ENCODE measurements at regions of chr1 and their contacts with region 1.

Region 1: DNA sequence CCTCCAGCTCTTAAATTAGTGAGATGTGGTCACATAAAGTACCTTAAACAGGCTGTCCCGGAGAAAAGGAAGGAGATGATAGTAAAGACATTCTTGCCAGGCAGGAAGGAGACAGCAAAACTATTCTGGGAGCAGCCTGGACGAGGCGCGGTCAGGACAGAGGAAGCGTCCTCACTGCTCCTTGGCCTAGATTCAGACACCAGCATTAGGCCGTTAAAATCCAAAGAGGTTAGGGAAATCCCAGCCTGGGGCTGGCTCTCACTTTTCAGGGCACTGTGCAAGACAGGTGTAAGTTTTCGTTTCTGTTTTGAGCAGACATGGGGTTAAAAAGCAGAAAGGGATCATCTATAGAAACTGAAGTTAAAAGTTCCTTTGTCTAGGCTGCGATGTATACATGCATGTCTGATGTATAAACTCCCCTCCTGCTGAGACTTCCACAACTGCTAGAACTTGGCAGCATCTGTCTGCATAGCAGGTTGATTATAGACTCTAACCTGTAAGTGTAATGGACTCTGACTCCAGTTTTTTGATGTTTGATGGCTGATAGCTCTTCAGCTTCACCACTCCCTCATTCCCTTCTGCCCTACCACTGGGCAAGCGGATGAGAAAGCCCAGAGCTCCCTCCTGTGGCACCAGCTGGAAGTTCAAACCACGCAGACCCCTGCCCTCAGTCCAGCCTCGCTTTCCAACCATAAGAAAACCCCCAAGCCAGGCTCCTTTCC is 21.5 kb downstream of the STPG1 start:
- DNase-seq: peak; percentile 78
- CTCF ChIP-seq: peak; percentile 84

Region 2: DNA sequence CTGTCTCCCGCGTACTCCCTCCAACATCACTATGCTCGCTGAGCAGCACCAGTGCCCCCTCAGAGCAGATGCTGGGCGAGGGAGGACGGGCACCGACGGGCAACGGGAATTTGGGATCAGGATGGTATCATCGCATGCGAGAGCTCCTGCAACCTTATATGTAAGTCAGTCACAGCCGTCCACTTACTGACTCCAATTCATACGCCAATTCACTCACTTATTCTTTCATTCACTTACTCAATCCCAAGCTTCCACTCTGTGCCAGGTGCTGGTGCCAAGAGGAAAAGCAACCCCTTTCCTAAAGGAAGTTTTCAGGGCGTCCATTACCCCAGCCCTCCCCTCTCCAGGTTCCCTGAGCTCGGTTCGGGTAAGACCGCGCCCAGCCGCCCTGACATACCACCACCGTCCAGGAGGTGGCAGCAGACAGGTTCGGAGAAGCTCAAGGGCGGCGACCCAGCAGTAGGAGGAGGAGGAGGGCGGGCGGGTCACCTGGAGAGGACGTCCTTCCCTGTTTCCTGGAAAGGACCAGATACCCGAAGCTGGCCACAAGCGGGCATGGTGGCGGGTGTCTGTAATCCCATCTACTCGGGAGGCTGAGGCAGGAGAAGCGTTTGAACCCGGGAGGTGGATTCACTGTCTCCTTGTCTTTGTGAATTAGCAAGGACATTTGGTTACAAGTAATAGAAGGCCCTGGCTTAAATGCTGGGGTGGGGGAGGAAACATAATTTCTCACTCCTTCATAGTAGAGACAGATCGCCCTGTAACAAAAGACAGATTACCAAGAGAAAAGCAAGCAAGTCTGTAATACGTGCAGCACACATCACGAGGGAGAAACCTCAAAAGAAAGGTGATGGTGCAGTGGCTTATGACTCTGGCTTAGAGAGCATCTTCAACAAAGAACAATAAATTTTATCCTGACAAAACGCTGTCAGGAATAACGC is 241.5 kb before region 1 on chr1:
- CTCF ChIA-PET with region 1: interaction called, 136 read pairs
- POLR2A ChIA-PET with region 1: no interaction called
- DNase-seq: peak; percentile 86
- CTCF ChIP-seq: peak; percentile 97

Region 3: GRCh38 chr1:24301785-24302175 is 90.3 kb before region 1 on chr1:
- CTCF ChIA-PET with region 1: interaction called, 15 read pairs
- POLR2A ChIA-PET with region 1: no interaction called
- DNase-seq: no peak
- CTCF ChIP-seq: no peak

Region 4: DNA sequence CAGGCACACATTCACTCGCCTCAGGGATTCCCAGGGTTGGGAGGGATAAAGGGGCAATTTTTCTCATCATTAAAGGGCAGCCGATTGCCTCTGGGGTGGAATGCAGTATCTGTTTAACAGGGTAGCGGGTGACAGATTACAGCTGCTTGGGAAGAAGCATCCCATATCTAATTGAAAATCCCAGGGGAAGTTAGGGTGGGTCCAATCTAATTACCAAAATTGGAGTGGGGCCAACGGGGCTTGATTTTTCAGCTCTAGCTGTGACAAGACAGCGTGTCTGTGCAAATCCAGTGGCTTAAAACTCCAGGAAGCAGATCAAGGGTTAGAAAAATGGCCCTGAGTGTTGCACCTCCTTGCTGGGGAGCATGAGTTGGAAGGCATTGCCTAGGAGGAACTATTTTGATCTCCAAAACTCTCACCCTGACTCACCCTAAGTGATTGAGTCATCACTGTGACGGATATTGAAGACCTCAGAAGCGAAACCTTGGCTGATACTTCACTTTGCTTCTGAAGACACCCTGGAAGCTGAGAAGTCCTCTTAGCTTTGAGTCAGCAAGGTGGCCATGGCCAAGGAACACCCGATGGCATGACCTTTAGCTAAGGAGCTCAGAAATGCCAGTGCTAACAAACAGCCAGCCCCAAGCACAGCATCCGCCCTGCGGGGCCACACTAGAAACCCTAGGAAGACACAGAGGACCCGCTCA is 26.9 kb before region 1 on chr1:
- CTCF ChIA-PET with region 1: interaction called, 31 read pairs
- POLR2A ChIA-PET with region 1: no interaction called
- DNase-seq: peak; percentile 81
- CTCF ChIP-seq: no peak

Region 5: DNA sequence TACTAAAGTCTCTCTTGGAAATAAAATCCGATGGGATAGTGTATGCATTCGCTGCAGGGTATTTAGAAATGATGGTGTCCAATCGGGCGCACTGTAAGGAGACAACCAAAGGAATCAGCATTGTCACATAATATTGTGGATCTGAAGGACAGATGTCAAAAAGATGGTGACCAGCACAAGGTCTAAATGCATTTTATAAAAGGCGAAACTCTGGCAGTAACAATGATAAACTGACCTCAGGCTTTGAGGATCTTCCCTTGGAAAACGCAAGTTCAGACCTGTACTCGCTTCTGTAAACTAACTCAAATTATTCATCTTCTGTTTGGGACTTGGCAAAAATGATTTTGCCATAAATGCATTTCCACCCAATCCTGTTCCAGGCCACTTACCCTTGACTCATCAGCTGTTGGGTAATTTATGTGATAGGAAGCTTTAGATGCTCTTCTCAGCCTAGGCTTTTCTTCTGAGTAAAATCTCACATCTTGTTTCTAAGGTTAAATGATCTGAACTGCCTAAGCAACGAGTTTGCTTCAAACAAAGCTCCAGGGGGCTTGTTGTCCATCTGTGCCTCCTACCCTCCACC is 12.2 kb before region 1 on chr1:
- CTCF ChIA-PET with region 1: interaction called, 40 read pairs
- POLR2A ChIA-PET with region 1: no interaction called
- DNase-seq: no peak
- CTCF ChIP-seq: no peak

Region 6: GRCh38 chr1:24409535-24409934 is 17.5 kb after region 1 on chr1:
- CTCF ChIA-PET with region 1: interaction called, 99 read pairs
- POLR2A ChIA-PET with region 1: no interaction called
- DNase-seq: no peak
- CTCF ChIP-seq: no peak

Region 7: GRCh38 chr1:24421502-24421901 is 29.5 kb after region 1 on chr1:
- CTCF ChIA-PET with region 1: interaction called, 99 read pairs
- POLR2A ChIA-PET with region 1: no interaction called
- DNase-seq: no peak
- CTCF ChIP-seq: no peak

Region 8: DNA sequence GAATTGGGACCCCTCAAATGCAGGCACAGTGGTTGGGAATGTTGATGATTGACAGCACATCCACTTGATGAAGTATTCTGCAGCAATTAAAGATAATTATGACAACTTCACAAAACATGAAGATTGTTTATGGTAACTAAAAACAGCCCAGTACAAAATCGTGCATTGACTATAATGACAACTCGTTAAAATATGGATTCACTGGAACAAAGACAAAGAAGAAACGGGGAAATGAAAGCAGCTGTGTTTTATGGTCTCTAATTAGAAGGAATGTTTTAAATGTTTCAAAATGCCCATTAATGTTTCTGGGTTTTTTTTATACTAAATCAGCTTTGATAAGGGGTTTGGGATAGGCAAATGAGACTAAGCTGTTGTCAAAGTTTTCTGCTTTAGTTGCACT is 59.7 kb after region 1 on chr1:
- CTCF ChIA-PET with region 1: no interaction called
- POLR2A ChIA-PET with region 1: no interaction called
- DNase-seq: no peak
- CTCF ChIP-seq: no peak

Measured in GM10248 (cell line).